ENCODE measurements at regions of chr7 and their contacts with region 1.

Region 1: GRCh38 chr7:55593515-55594318 is 21.4 kb upstream of the VOPP1 start:
- DNase-seq: peak; percentile 60 to 70 (median 67)
- ATAC-seq: peak; percentile 58 to 73 (median 66)
- H3K4me3 ChIP-seq: no peak overlapping the region
- H3K27ac ChIP-seq: no peak overlapping the region
- H3K4me1 ChIP-seq: no peaks in the 10 kb centered on the region
- H3K27me3 ChIP-seq: no peaks in the 10 kb centered on the region
- CTCF ChIP-seq: peak; percentile 52 to 72 (median 66)
- POLR2A ChIP-seq: no peak

Region 2: GRCh38 chr7:55279080-55279845 is 314.5 kb before region 1 on chr7:
- intact Hi-C with region 1: loop called in 1 of 2 experiments (anchors 5 kb)
- DNase-seq: no peak
- ATAC-seq: peak in 1 of 4 donors; percentile 11
- H3K4me3 ChIP-seq: no peak overlapping the region
- H3K27ac ChIP-seq: no peak overlapping the region
- H3K4me1 ChIP-seq: no peaks in the 10 kb centered on the region
- H3K27me3 ChIP-seq: no peaks in the 10 kb centered on the region
- CTCF ChIP-seq: no peak
- POLR2A ChIP-seq: no peak

Region 3: DNA sequence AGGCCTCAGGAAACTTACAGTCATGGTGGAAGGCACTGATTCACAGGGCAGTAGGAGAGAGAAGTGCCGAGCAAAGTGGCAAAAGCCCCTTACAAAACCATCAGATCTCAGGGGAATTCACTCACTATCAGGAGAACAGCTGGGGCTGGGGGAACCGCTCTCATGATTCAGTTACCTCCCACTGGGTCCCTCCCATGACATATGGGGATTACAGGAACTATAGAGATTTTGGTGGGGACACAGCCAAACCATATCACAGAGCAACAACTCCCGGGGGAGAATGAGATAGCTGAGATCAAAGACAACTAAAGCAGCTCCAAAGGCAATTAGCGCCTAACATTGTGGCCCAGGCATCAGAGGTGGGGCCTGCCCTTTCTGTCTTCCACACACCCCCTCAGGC is 63.9 kb after region 1 on chr7:
- intact Hi-C with region 1: no loop called
- DNase-seq: no peak
- ATAC-seq: no peak
- H3K4me3 ChIP-seq: no peak overlapping the region
- H3K27ac ChIP-seq: no peak overlapping the region
- H3K4me1 ChIP-seq: no peaks in the 10 kb centered on the region
- H3K27me3 ChIP-seq: no peaks in the 10 kb centered on the region
- CTCF ChIP-seq: no peak
- POLR2A ChIP-seq: no peak

Region 4: DNA sequence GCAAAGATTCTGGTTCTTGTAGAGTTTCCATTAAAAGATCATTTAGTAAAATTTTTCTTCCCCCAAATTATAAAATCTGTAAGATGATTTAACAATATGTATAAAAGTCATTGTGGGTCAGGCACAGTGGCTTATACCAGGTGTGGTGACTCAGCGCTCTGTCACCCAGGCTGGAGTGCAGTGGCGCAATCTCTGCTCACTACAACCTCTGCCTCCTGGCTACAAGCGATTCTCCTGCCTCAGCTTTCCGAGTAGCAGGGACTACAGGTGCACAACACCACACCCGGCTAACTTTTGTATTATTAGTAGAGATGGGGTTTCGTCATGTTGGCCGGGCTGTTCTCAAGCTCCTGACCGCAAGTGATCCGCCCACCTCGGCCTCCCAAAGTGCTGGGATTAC is 200.8 kb after region 1 on chr7:
- intact Hi-C with region 1: no loop called
- DNase-seq: no peak
- ATAC-seq: no peak
- H3K4me3 ChIP-seq: no peak overlapping the region
- H3K27ac ChIP-seq: no peak overlapping the region
- H3K4me1 ChIP-seq: no peaks in the 10 kb centered on the region
- H3K27me3 ChIP-seq: no peaks in the 10 kb centered on the region
- CTCF ChIP-seq: no peak
- POLR2A ChIP-seq: no peak